Heart right ventricle (tissue), 16 donors: ENCODE measurements at regions of chr7 and their contacts with region 1.

Region 1: DNA sequence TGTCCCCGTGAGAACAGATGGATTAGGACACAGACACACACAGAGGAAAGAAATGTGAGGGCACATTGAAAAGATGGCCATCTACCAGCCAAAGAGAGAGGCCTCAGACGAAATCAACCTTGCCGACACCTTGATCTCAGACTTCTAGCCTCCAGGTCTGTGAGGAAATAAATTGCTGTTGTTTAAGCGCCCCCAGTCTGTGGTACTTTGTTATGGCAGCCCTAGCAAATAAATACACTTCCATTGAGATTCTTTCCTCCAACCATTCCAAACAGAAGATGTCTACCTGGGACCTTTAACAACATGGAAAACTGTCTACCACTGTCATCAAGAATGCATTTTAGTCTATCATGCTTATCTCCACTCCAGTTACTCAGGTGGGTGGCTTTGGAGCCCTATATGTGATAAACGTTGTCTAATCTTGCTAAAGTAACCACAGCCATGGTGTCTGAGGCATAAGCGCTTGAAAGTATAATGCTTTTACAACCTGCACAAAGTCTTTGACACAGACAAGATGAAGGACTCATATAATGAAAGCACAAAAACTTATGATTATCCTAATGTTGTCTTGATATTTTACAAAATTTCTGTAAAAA is 244.3 kb downstream of the MTERF1 start:
- DNase-seq: peak in 1 of 2 donors; percentile 11
- ATAC-seq: peak in 4 of 8 donors; percentile 25 to 52 (median 40)
- H3K4me3 ChIP-seq: no peak overlapping the region
- H3K27ac ChIP-seq: no peak overlapping the region
- H3K4me1 ChIP-seq: peaks cover 0 to 15% (median 0%) of the 10 kb centered on the region in 9 donors
- H3K27me3 ChIP-seq: no peaks in the 10 kb centered on the region
- CTCF ChIP-seq: peak; percentile 24 to 67 (median 58)

Region 2: DNA sequence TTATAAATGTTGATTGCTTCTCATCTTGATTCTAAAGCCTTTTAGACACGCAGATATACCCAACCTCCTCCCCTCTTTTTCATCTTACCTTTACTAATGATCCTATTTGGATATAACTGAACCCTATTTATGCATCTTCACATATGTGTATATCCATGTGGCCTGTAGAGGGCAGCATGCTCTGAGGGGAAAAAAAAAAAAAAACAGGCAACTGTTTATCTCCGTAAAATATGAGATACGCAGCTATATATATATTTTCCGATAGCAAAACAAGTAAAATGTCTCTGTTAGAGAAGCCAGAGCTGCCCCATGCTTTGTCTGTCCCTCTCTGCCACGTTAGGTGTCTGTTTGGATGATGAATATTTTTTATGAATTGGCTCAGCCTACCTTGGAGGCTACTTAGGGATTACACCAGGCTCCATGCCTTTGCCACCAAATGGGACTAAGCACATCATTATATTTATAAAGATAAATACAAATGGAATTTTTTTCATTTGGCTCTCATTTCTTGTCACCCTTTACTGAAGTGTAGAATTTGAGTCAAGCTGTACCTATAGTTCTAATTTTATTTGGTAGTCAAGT is 546.8 kb before region 1 on chr7:
- intact Hi-C with region 1: loop called (anchors 2 to 10 kb)
- DNase-seq: no peak
- ATAC-seq: peak; percentile 28 to 73 (median 64)
- H3K4me3 ChIP-seq: peak overlapping the region in 7 of 10 donors; percentile 6 to 44 (median 36)
- H3K27ac ChIP-seq: peak overlapping the region in 4 of 10 donors; percentile 29 to 62 (median 40)
- H3K4me1 ChIP-seq: peaks cover 0 to 21% (median 9%) of the 10 kb centered on the region in 9 donors
- H3K27me3 ChIP-seq: no peaks in the 10 kb centered on the region
- CTCF ChIP-seq: peak; percentile 63 to 89 (median 82)

Region 3: GRCh38 chr7:91264046-91264923 is 371.9 kb before region 1 on chr7 and contains the start of gene FZD1:
- intact Hi-C with region 1: loop called in 1 of 10 experiments (anchors 10 kb)
- DNase-seq: peak; percentile 96 to 97
- ATAC-seq: peak; percentile 93 to 98 (median 96)
- H3K4me3 ChIP-seq: peak within 1 kb of the TSS; percentile 73 to 93 (median 84)
- H3K27ac ChIP-seq: peak within 1 kb of the TSS; percentile 87 to 98 (median 96)
- H3K4me1 ChIP-seq: peaks cover 3 to 47% (median 28%) of the 10 kb centered on the region in 9 donors
- H3K27me3 ChIP-seq: peaks cover 0 to 26% (median 0%) of the 10 kb centered on the region in 7 donors
- CTCF ChIP-seq: peak in 2 of 9 donors; percentile 27 to 31
- total RNA-seq, gene FZD1: 4.1 to 36.0 (median 17.5) TPM

Region 4: GRCh38 chr7:91288208-91288824 is 347.9 kb before region 1 on chr7:
- intact Hi-C with region 1: loop called in 7 of 10 experiments (anchors 2 to 10 kb)
- DNase-seq: peak; percentile 23 to 35
- ATAC-seq: peak in 3 of 8 donors; percentile 51 to 62 (median 57)
- H3K4me3 ChIP-seq: no peak overlapping the region
- H3K27ac ChIP-seq: no peak overlapping the region
- H3K4me1 ChIP-seq: peaks cover 0 to 13% (median 0%) of the 10 kb centered on the region in 9 donors
- H3K27me3 ChIP-seq: no peaks in the 10 kb centered on the region
- CTCF ChIP-seq: peak in 7 of 9 donors; percentile 44 to 60 (median 53)

Region 5: GRCh38 chr7:91603707-91604106 is 32.5 kb before region 1 on chr7:
- intact Hi-C with region 1: no loop called
- DNase-seq: no peak
- ATAC-seq: no peak
- H3K4me3 ChIP-seq: no peak overlapping the region
- H3K27ac ChIP-seq: no peak overlapping the region
- H3K4me1 ChIP-seq: no peaks in the 10 kb centered on the region
- H3K27me3 ChIP-seq: no peaks in the 10 kb centered on the region
- CTCF ChIP-seq: no peak

Region 6: GRCh38 chr7:91771921-91772815 is 135.9 kb after region 1 on chr7:
- intact Hi-C with region 1: loop called in 1 of 10 experiments (anchors 10 kb)
- DNase-seq: no peak
- ATAC-seq: peak in 6 of 8 donors; percentile 42 to 89 (median 66)
- H3K4me3 ChIP-seq: no peak overlapping the region
- H3K27ac ChIP-seq: peak overlapping the region in 5 of 10 donors; percentile 23 to 34 (median 31)
- H3K4me1 ChIP-seq: peaks cover 0 to 16% (median 5%) of the 10 kb centered on the region in 9 donors
- H3K27me3 ChIP-seq: no peaks in the 10 kb centered on the region
- CTCF ChIP-seq: no peak